ENCODE measurements at regions of chr7 and their contacts with region 1.

Region 1: DNA sequence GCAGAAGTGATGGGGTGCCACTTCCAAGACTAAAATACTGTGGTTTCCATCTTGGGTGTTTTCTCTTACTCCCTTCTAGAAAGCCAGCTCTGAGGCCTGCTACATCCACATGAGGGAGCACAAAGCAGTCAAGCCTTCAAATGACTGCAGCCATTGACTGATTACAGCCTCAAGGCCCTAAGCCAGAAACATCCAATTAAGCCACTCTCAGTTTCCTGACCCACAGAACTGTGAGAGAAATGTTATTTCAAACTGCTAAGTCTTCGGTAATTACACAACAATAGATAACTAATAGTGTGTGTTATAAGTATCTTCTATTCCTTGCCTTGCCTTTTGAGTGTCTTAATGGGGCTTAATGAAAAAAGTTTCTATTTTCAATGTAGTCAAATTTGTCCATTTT is 24.8 kb downstream of the BRAF start:
- DNase-seq: no peak
- H3K4me3 ChIP-seq: no peak overlapping the region
- H3K27ac ChIP-seq: no peak overlapping the region
- H3K4me1 ChIP-seq: peaks cover 0 to 19% (median 1%) of the 10 kb centered on the region in 4 donors
- H3K27me3 ChIP-seq: no peaks in the 10 kb centered on the region
- CTCF ChIP-seq: no peak

Region 2: GRCh38 chr7:140517546-140518369 is 382.1 kb before region 1 on chr7:
- intact Hi-C with region 1: no loop called
- DNase-seq: peak; percentile 88 to 91
- H3K4me3 ChIP-seq: no peak overlapping the region
- H3K27ac ChIP-seq: no peak overlapping the region
- H3K4me1 ChIP-seq: peaks cover 0 to 3% (median 0%) of the 10 kb centered on the region in 4 donors
- H3K27me3 ChIP-seq: peaks cover 0 to 2% of the 10 kb centered on the region in 2 donors
- CTCF ChIP-seq: peak; percentile 78 to 86

Region 3: GRCh38 chr7:140961117-140961516 is 61.2 kb after region 1 on chr7:
- intact Hi-C with region 1: no loop called
- DNase-seq: no peak
- H3K4me3 ChIP-seq: no peak overlapping the region
- H3K27ac ChIP-seq: no peak overlapping the region
- H3K4me1 ChIP-seq: no peaks in the 10 kb centered on the region
- H3K27me3 ChIP-seq: no peaks in the 10 kb centered on the region
- CTCF ChIP-seq: no peak

Region 4: DNA sequence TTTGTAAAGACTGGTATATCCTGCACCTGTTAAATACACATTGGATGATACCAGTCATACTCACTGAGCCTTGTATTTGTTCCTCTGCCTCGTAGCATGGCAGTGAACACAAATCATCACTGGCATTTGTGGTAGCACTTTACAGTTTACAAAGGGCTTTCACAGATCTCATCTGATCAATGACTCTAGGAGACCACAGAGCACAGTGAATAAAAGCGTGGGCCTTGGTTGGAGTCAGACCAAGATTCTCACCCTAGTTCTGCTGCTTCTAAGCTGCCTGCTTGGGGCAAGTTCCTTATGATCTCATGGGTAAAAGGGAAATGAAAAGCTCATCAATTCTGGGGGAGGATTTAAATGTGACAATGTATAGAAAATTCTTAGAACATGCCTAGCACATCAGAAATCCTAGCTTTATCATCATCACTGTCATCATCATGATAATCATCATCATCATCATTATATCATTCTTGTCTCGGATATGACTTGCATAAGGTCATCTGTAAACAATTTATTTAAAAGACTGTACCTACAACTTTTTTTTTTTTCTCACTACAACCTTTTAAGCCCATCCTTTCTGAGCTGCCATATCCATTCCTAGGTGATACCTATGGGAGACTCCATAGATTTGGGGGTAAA is 521.5 kb after region 1 on chr7:
- intact Hi-C with region 1: loop called (anchors 10 kb)
- DNase-seq: no peak
- H3K4me3 ChIP-seq: no peak overlapping the region
- H3K27ac ChIP-seq: no peak overlapping the region
- H3K4me1 ChIP-seq: no peaks in the 10 kb centered on the region
- H3K27me3 ChIP-seq: no peaks in the 10 kb centered on the region
- CTCF ChIP-seq: no peak

Measured in tibial artery (tissue), 4 donors.